Thyroid gland (tissue), 4 donors: ENCODE measurements at regions of chr3 and their contacts with region 1.

Region 1: DNA sequence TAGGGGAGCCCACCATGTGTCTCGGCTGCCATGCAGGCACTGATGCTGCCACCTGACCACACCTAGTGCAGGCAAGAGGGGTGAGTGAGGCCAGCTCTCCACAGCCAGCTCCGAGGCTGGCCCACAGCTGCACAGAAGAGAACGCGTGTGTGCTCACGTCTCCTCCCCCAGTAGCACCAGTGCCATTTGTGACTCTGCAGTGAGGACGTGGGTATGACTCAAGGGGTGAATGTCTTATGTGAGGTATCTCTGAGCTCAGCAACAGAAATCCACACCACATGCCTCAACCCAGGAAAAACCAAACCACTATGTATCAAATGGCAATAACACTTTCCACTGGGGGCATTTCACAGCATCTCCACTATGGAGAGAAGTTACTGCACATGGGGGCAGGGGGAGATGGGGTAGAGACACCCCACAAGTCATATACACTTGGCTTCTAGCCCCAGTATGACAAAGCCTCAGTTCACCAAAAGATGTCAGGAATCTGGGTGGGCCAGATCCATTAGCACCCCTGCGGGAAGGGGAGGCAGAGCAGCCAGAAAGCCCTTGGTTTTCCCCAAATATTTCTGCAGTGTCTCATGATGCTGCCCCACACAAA is 87.6 kb downstream of the LRIG1 start:
- DNase-seq: no peak
- H3K4me3 ChIP-seq: no peak overlapping the region
- H3K27ac ChIP-seq: no peak overlapping the region
- H3K4me1 ChIP-seq: peaks cover 6 to 7% of the 10 kb centered on the region in 2 donors
- H3K27me3 ChIP-seq: no peaks in the 10 kb centered on the region
- CTCF ChIP-seq: no peak
- POLR2A ChIP-seq: no peak

Region 2: DNA sequence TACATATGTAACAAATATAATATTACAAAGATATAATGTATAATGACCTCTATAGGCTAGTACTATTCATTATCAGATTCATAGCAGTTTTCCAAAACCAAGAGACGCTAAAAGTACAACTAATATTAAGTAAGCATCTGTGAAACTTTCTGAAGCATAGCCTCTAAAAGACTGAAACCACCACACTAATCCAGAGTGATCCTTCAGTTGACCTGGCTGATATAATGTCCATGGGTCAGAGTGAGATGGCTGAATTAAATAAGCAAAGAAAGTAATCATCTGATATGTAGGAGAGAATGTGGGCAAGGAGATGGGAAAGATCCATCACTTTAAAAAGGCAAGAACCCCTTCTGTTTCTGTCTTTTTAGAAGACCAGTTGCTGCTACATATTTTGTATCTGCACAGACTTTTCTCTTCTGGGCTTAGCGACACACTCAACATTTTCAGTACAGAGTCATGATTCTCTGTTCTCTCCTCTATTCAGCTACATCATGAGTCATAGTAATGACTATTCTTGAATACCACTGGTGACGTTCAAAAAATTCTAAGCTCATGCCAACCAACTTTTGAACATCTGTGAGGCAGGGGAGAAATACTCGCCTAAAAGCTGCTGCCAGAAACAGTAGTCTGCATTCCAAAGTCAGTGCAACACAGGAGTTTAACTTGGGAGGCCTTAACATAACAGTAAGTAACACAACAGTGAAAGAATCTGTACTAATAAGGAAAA is 524.1 kb before region 1 on chr3:
- intact Hi-C with region 1: no loop called
- DNase-seq: no peak
- H3K4me3 ChIP-seq: no peak overlapping the region
- H3K27ac ChIP-seq: peak overlapping the region in 1 of 3 donors; percentile 48
- H3K4me1 ChIP-seq: peaks cover 7 to 9% of the 10 kb centered on the region in 2 donors
- H3K27me3 ChIP-seq: no peaks in the 10 kb centered on the region
- CTCF ChIP-seq: no peak
- POLR2A ChIP-seq: no peak

Region 3: GRCh38 chr3:66480666-66481065 is 67.4 kb after region 1 on chr3:
- intact Hi-C with region 1: no loop called
- DNase-seq: no peak
- H3K4me3 ChIP-seq: no peak overlapping the region
- H3K27ac ChIP-seq: peak overlapping the region in 2 of 3 donors; percentile 25 to 80
- H3K4me1 ChIP-seq: peaks cover 43 to 66% of the 10 kb centered on the region in 2 donors
- H3K27me3 ChIP-seq: no peaks in the 10 kb centered on the region
- CTCF ChIP-seq: no peak
- POLR2A ChIP-seq: no peak

Region 4: GRCh38 chr3:66500576-66501482 is 87.6 kb after region 1 on chr3 and contains the start of gene LRIG1:
- intact Hi-C with region 1: loop called (anchors 5 kb)
- DNase-seq: peak; percentile 100
- H3K4me3 ChIP-seq: peak within 1 kb of the TSS; percentile 60 to 98 (median 81)
- H3K27ac ChIP-seq: peak within 1 kb of the TSS; percentile 88 to 93 (median 90)
- H3K4me1 ChIP-seq: peaks cover 28 to 32% of the 10 kb centered on the region in 2 donors
- H3K27me3 ChIP-seq: no peaks in the 10 kb centered on the region
- CTCF ChIP-seq: peak in 3 of 6 experiments; percentile 32 to 58 (median 40)
- POLR2A ChIP-seq: peak; percentile 37 to 92
- total RNA-seq, gene LRIG1: 45.8 to 69.7 (median 61.7) TPM